Body of pancreas (tissue), 4 donors: ENCODE measurements at regions of chr15 and their contacts with region 1.

Region 1: DNA sequence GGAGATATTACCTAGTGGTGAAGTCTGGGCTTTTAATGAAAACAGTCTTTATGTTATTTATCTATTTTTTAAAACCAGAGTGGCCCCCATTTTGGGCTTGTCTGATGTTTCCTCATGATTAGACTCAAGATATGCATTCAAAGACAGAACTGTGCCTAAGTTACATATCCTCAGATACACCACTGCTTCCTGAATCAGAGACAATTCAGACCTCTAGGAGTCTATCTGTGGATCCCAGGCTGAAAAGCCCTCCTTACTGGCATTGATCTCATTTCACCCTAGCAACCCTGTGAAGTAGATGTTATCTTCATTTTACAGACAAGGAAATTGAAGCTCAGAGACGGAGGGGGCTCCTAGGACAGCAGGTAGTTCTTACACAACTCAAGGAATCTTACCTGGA is 16.8 kb upstream of the TGM5 start:
- DNase-seq: no peak
- ATAC-seq: no peak
- H3K4me3 ChIP-seq: no peak overlapping the region
- H3K27ac ChIP-seq: no peak overlapping the region
- H3K4me1 ChIP-seq: no peaks in the 10 kb centered on the region
- H3K27me3 ChIP-seq: no peaks in the 10 kb centered on the region
- CTCF ChIP-seq: no peak
- POLR2A ChIP-seq: no peak

Region 2: GRCh38 chr15:43106486-43106829 is 177.1 kb before region 1 on chr15:
- intact Hi-C with region 1: no loop called
- DNase-seq: no peak
- ATAC-seq: no peak
- H3K4me3 ChIP-seq: peak overlapping the region in 1 of 2 donors; percentile 42
- H3K27ac ChIP-seq: peak overlapping the region; percentile 82 to 88 (median 85)
- H3K4me1 ChIP-seq: peaks cover 25% of the 10 kb centered on the region
- H3K27me3 ChIP-seq: no peaks in the 10 kb centered on the region
- CTCF ChIP-seq: no peak
- POLR2A ChIP-seq: no peak

Region 3: DNA sequence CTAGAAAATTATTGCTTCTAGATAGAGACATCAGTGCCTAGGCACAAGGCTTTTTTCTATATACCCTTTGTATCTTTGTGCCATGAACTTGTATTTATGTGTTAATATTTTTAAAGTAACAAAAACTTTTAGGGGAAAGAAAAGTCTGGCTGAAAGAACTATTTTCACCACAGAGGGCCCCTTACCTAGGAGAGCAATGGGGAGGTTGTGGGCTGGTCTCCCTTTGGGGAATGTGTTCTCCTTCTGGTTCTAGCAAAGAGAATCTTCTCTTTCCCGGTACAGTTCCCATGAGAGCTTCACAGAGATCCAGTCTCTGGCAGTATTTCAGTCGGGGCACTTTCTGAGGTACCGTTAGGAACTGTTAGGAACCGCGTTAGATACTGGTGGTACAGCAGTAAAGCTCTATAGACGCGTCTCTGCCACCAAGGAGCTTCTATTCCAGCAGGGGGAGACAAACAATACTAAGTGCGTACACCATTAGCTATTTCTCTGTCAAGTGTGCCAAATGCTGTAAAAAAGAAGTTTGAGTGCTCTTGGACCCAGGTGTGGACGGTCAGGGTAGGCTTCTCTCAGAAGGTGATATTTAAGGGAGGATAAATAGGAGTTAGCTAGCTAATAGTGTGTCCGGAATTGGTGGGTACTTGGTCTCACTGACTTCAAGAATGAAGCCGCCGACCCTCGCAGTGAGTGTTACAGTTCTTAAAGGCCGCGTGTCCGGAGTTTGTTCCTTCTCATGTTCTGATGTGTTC is 58.2 kb before region 1 on chr15:
- intact Hi-C with region 1: loop called (anchors 5 kb)
- DNase-seq: peak; percentile 40 to 61 (median 57)
- ATAC-seq: peak; percentile 78
- H3K4me3 ChIP-seq: no peak overlapping the region
- H3K27ac ChIP-seq: no peak overlapping the region
- H3K4me1 ChIP-seq: no peaks in the 10 kb centered on the region
- H3K27me3 ChIP-seq: no peaks in the 10 kb centered on the region
- CTCF ChIP-seq: peak; percentile 52 to 73 (median 65)
- POLR2A ChIP-seq: no peak